Heart right ventricle (tissue), 16 donors: ENCODE measurements at regions of chr10 and their contacts with region 1.

Region 1: DNA sequence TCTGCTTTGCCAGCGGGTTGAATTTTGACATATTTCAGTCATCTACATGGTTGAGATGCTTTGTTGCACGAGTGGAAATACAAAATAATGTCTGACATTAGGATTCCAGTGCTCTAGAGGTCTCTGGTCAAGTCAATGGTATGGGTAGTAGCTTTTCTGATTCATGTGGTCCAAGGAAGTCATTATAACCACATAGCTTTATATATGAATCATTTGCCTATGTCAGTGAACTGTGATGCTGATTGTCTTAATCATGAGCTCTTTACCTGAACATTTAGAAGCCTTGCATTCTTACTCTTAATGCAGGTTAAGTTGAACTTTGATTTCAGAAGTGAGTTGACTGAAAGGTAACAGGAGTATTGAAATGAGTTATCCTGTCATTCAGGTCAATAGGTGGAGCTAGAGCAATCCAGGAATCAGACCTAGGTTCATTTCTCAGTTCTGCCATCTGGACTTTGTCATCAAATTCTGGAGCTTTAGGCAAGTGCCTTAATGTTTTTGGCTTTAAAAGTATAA is 3.3 kb downstream of the MAPK8 start:
- DNase-seq: no peak
- ATAC-seq: no peak
- H3K4me3 ChIP-seq: no peak overlapping the region
- H3K27ac ChIP-seq: no peak overlapping the region
- H3K4me1 ChIP-seq: peaks cover 0 to 51% (median 42%) of the 10 kb centered on the region in 9 donors
- H3K27me3 ChIP-seq: no peaks in the 10 kb centered on the region
- CTCF ChIP-seq: peak in 8 of 9 donors; percentile 10 to 48 (median 32)

Region 2: GRCh38 chr10:48336978-48337599 is 27.3 kb after region 1 on chr10:
- intact Hi-C with region 1: loop called in 1 of 10 experiments (anchors 2 kb)
- DNase-seq: no peak
- ATAC-seq: no peak
- H3K4me3 ChIP-seq: no peak overlapping the region
- H3K27ac ChIP-seq: no peak overlapping the region
- H3K4me1 ChIP-seq: peaks cover 0 to 48% (median 12%) of the 10 kb centered on the region in 9 donors
- H3K27me3 ChIP-seq: no peaks in the 10 kb centered on the region
- CTCF ChIP-seq: no peak

Region 3: DNA sequence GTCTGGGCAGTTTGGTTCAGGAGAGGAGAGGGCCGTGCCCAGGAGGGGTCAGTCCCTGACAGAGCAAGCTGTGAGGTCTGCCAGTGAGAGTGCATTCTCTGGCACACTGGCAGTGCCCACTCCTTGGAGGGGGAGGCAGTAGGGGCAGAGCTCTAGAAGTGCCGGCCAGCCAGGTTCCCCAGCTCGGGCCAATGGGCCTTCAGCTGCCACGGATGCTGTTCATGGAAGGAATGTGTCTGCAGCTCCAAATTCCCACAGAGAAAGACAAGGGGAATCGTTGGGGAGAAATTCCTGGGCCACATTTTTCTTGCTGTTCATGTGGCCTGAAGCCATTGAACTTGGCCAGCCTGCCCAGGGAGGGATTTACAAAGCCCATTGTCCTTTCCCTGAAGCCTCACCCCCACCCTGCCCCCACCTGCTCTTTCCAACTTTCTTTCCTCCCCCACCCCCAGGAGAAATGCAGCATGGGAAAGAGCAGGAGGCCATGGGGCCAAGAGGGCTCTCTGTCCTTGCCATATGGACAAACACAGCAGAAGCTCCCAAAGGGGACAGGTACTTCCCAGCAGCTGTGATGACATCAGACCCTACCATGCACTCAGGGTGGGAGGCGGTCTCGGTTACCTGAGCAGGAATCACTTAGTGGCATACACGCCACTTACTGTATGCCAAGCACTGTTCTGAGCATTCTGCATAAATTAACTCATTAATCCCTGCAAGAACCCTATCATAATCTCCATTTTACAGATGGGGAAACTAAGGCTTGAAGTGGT is 224.4 kb after region 1 on chr10:
- intact Hi-C with region 1: no loop called
- DNase-seq: no peak
- ATAC-seq: peak in 4 of 8 donors; percentile 22 to 62 (median 54)
- H3K4me3 ChIP-seq: no peak overlapping the region
- H3K27ac ChIP-seq: no peak overlapping the region
- H3K4me1 ChIP-seq: peaks cover 0 to 8% (median 0%) of the 10 kb centered on the region in 9 donors
- H3K27me3 ChIP-seq: no peaks in the 10 kb centered on the region
- CTCF ChIP-seq: no peak